ENCODE measurements at regions of chr7 and their contacts with region 1.

Region 1: GRCh38 chr7:90188281-90188680 is 23.3 kb upstream of the STEAP2 start:
- DNase-seq: no peak
- ATAC-seq: peak; percentile 95
- H3K4me3 ChIP-seq: no peak overlapping the region
- H3K27ac ChIP-seq: no peak overlapping the region
- H3K4me1 ChIP-seq: no peaks in the 10 kb centered on the region
- H3K27me3 ChIP-seq: no peaks in the 10 kb centered on the region
- CTCF ChIP-seq: no peak
- EP300 ChIP-seq: no peak
- POLR2A ChIP-seq: no peak
- RAD21 ChIP-seq: no peak

Region 2: DNA sequence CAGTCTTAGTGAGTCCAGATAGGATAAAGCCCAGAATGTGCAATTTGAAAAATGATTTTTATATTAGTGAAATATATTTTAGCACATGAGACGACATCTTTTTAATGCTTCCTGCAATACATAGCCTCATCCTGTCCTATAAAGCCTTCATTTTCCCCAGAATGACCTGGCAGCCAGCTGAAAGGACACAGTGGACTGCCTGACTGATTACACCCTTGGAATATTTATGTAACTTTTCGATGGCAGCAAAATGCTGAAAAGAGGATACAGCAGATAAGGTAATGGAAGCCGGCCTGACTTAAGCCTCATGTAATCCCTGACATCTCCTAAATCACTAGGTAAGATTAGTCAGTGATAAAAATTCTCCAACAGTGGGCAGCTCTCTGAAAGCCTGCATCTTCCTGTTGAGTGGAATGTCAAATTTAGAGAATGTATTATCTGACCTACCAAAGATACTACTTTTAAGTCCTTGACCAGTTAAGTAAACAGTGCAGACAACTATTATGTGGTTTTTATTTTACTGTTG is 244.7 kb before region 1 on chr7:
- CTCF ChIA-PET with region 1: no interaction called
- POLR2A ChIA-PET with region 1: no interaction called
- RAD21 ChIA-PET with region 1: no interaction called
- SMC1A ChIA-PET with region 1: no interaction called
- in situ Hi-C with region 1: no loop called
- intact Hi-C with region 1: no loop called
- DNase-seq: no peak
- ATAC-seq: no peak
- H3K4me3 ChIP-seq: no peak overlapping the region
- H3K27ac ChIP-seq: no peak overlapping the region
- H3K4me1 ChIP-seq: no peaks in the 10 kb centered on the region
- H3K27me3 ChIP-seq: no peaks in the 10 kb centered on the region
- CTCF ChIP-seq: no peak
- EP300 ChIP-seq: no peak
- POLR2A ChIP-seq: no peak
- RAD21 ChIP-seq: no peak

Region 3: GRCh38 chr7:90165724-90166123 is 22.6 kb before region 1 on chr7:
- CTCF ChIA-PET with region 1: interaction called, 3 read pairs
- POLR2A ChIA-PET with region 1: interaction called, 3 read pairs
- RAD21 ChIA-PET with region 1: no interaction called
- SMC1A ChIA-PET with region 1: interaction called, 15 read pairs
- in situ Hi-C with region 1: no loop called
- intact Hi-C with region 1: no loop called
- DNase-seq: no peak
- ATAC-seq: no peak
- H3K4me3 ChIP-seq: no peak overlapping the region
- H3K27ac ChIP-seq: no peak overlapping the region
- H3K4me1 ChIP-seq: no peaks in the 10 kb centered on the region
- H3K27me3 ChIP-seq: no peaks in the 10 kb centered on the region
- CTCF ChIP-seq: no peak
- EP300 ChIP-seq: no peak
- POLR2A ChIP-seq: no peak
- RAD21 ChIP-seq: no peak

Region 4: DNA sequence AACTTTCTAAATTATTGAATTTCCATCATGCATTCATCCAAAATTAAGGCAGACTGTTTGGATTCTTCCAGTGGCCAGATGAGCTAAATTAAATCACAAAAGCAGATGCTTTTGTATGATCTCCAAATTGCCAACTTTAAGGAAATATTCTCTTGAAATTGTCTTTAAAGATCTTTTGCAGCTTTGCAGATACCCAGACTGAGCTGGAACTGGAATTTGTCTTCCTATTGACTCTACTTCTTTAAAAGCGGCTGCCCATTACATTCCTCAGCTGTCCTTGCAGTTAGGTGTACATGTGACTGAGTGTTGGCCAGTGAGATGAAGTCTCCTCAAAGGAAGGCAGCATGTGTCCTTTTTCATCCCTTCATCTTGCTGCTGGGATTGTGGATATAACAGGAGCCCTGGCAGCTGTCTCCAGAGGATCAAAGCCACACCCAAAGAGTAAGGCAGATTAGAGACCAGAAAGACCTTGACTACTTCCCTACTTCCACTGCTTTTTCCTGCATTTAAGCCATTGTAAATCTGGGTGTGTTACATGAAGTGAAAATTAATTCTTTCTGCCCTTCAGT is 48.5 kb after region 1 on chr7:
- CTCF ChIA-PET with region 1: interaction called, 15 read pairs
- POLR2A ChIA-PET with region 1: no interaction called
- RAD21 ChIA-PET with region 1: interaction called, 5 read pairs
- SMC1A ChIA-PET with region 1: interaction called, 17 read pairs
- in situ Hi-C with region 1: no loop called
- intact Hi-C with region 1: no loop called
- DNase-seq: no peak
- ATAC-seq: no peak
- H3K4me3 ChIP-seq: no peak overlapping the region
- H3K27ac ChIP-seq: no peak overlapping the region
- H3K4me1 ChIP-seq: no peaks in the 10 kb centered on the region
- H3K27me3 ChIP-seq: no peaks in the 10 kb centered on the region
- CTCF ChIP-seq: no peak
- EP300 ChIP-seq: no peak
- POLR2A ChIP-seq: no peak
- RAD21 ChIP-seq: no peak

Region 5: DNA sequence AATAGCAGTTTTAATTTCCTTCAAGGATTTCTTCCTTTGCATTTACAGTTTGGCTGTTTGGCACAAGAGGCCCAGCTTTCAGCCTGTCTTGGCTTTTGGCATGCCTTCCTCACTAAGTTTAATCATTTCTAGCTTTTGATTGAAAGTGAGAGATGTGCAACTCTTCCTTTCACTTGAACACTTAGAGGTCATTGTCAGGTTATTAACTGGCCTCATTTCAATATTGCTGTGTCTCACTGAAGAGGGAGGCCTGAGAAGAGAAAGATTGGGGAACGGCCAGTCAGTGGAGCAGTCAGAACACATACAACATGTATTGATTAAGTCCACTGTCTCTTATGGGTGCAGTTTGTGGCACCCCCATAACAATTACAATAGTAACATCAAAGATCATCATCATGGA is 315.1 kb after region 1 on chr7:
- CTCF ChIA-PET with region 1: no interaction called
- POLR2A ChIA-PET with region 1: no interaction called
- RAD21 ChIA-PET with region 1: no interaction called
- SMC1A ChIA-PET with region 1: no interaction called
- in situ Hi-C with region 1: no loop called
- intact Hi-C with region 1: no loop called
- DNase-seq: no peak
- ATAC-seq: peak; percentile 36
- H3K4me3 ChIP-seq: no peak overlapping the region
- H3K27ac ChIP-seq: no peak overlapping the region
- H3K4me1 ChIP-seq: no peaks in the 10 kb centered on the region
- H3K27me3 ChIP-seq: no peaks in the 10 kb centered on the region
- CTCF ChIP-seq: no peak
- EP300 ChIP-seq: no peak
- POLR2A ChIP-seq: no peak
- RAD21 ChIP-seq: no peak

Measured in GM12878 (cell line).